Caco-2 (cell line): ENCODE measurements at regions of chr10 and their contacts with region 1.

Region 1: GRCh38 chr10:32958085-32959005 is at the start of gene ITGB1:
- DNase-seq: peak; percentile 98 to 100
- H3K4me3 ChIP-seq: peak within 1 kb of the TSS; percentile 91
- H3K4me3 Mint-ChIP-seq: peak within 1 kb of the TSS; percentile 92
- H3K27ac Mint-ChIP-seq: peak within 1 kb of the TSS; percentile 99
- H3K4me1 ChIP-seq: peaks cover 49% of the 10 kb centered on the region
- H3K4me1 Mint-ChIP-seq: peaks cover 48% of the 10 kb centered on the region
- H3K27me3 ChIP-seq: no peaks in the 10 kb centered on the region
- H3K27me3 Mint-ChIP-seq: no peaks in the 10 kb centered on the region
- CTCF ChIP-seq: no peak
- total RNA-seq, gene ITGB1: 404 and 474 TPM in 2 replicates

Region 2: DNA sequence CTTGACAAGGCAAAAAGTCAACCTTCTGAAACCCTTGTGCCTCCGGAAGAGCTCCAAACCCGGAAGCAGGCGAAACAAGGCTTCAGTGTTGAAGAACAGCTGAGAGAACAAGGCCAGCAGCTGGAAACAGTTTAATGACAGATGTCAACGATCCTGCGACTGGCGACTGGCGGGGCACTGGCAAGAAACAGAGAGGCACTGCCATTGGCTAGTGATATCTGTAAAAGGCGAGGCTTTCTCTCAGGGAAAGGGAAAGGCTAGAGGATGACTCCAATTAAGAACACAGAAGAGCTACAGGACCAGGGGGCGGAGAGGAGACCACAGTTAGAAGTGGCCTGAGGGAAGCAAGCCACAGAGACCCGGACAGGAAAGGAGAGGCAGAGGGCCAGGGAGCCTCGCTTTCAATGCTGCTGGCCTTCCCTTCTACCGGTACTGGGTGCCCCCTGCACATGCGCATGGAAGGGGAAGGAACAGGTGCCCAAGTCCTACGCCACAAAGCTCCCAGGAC is 19.7 kb before region 1 on chr10:
- CTCF ChIA-PET with region 1: no interaction called
- POLR2A ChIA-PET with region 1: interaction called, 6 read pairs
- intact Hi-C with region 1: loop called (anchors 1 kb)
- DNase-seq: peak in 1 of 2 experiments; percentile 59
- H3K4me3 ChIP-seq: no peak overlapping the region
- H3K4me3 Mint-ChIP-seq: peak overlapping the region; percentile 40
- H3K27ac Mint-ChIP-seq: peak overlapping the region; percentile 70
- H3K4me1 ChIP-seq: peaks cover 29% of the 10 kb centered on the region
- H3K4me1 Mint-ChIP-seq: peaks cover 33% of the 10 kb centered on the region
- H3K27me3 ChIP-seq: no peaks in the 10 kb centered on the region
- H3K27me3 Mint-ChIP-seq: no peaks in the 10 kb centered on the region
- CTCF ChIP-seq: no peak

Region 3: GRCh38 chr10:32971536-32972091 is 13.3 kb after region 1 on chr10:
- CTCF ChIA-PET with region 1: no interaction called
- POLR2A ChIA-PET with region 1: interaction called, 4 read pairs
- intact Hi-C with region 1: loop called (anchors 1 kb)
- DNase-seq: peak; percentile 70 to 72
- H3K4me3 ChIP-seq: no peak overlapping the region
- H3K4me3 Mint-ChIP-seq: peak overlapping the region; percentile 51
- H3K27ac Mint-ChIP-seq: peak overlapping the region; percentile 58
- H3K4me1 ChIP-seq: peaks cover 27% of the 10 kb centered on the region
- H3K4me1 Mint-ChIP-seq: peaks cover 23% of the 10 kb centered on the region
- H3K27me3 ChIP-seq: no peaks in the 10 kb centered on the region
- H3K27me3 Mint-ChIP-seq: no peaks in the 10 kb centered on the region
- CTCF ChIP-seq: no peak

Region 4: DNA sequence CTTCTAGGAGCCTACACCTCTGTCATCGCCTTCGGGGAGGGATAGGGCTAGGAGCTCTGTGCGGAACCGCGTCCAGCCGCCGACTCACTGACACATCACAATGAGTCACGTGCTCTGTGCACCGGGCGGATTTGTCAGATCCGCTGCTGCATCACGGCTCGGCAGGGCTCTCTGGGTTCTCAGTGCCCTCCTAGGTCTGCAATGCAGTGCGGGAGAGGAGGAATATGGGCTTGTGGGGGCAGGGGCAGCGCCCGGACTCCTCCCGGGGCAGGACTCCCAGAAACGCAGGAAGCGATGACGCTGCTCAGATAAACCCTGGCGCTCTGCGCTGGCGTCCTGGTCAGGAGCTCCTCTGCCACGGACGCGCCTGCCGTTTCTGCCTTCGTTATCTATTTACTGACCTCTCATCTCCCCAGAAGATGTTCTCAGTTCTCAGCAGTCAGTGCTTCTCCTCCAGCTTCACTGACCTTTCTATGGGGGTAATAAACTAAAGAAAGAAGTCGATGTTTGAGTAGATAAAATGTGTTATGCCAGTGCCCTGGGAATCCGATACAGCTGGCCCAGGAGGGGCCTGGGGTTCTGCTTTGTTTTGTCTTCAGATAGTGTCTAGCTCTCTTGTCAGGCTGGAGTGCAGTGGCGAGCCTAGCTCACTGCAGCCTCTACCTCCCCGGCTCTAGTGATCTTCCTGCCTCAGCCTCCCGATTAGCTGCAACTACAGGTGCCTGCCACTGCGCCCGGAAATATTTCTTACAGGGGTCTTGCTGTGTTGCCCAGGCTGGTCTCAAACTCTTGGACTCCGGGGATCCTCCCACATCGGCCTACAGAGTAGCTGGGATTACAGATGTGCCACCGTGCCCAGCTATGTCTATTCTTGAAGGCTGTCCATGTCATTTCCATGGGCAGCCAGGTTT is 22.5 kb after region 1 on chr10:
- CTCF ChIA-PET with region 1: interaction called, 3 read pairs
- POLR2A ChIA-PET with region 1: interaction called, 12 read pairs
- intact Hi-C with region 1: loop called (anchors 1 kb)
- DNase-seq: peak; percentile 92 to 96
- H3K4me3 ChIP-seq: peak overlapping the region; percentile 41
- H3K4me3 Mint-ChIP-seq: peak overlapping the region; percentile 94
- H3K27ac Mint-ChIP-seq: peak overlapping the region; percentile 97
- H3K4me1 ChIP-seq: peaks cover 42% of the 10 kb centered on the region
- H3K4me1 Mint-ChIP-seq: peaks cover 27% of the 10 kb centered on the region
- H3K27me3 ChIP-seq: no peaks in the 10 kb centered on the region
- H3K27me3 Mint-ChIP-seq: no peaks in the 10 kb centered on the region
- CTCF ChIP-seq: no peak

Region 5: DNA sequence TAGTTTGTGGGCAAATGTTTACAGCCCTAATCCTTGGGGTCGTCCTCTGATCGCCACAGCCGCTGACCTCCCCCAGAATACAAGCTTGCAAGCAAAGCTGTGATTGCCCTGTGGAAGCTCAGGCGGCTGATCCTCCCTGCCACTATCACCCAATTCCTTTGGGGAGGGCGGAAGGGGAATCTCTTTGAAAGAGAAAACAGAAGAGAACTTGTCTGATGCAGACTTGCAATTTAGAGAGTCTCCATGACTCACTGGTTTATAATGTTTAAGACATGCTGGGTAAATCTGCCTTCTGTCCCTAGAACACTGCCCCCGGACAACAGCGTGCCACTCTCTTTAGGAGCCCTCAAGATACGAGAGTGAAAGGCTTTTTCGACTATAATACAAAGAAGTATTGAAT is 300.6 kb after region 1 on chr10:
- CTCF ChIA-PET with region 1: no interaction called
- POLR2A ChIA-PET with region 1: no interaction called
- intact Hi-C with region 1: loop called (anchors 10 kb)
- DNase-seq: no peak
- H3K4me3 ChIP-seq: no peak overlapping the region
- H3K4me3 Mint-ChIP-seq: no peak overlapping the region
- H3K27ac Mint-ChIP-seq: peak overlapping the region; percentile 55
- H3K4me1 ChIP-seq: peaks cover 42% of the 10 kb centered on the region
- H3K4me1 Mint-ChIP-seq: peaks cover 38% of the 10 kb centered on the region
- H3K27me3 ChIP-seq: no peaks in the 10 kb centered on the region
- H3K27me3 Mint-ChIP-seq: no peaks in the 10 kb centered on the region
- CTCF ChIP-seq: no peak

Region 6: DNA sequence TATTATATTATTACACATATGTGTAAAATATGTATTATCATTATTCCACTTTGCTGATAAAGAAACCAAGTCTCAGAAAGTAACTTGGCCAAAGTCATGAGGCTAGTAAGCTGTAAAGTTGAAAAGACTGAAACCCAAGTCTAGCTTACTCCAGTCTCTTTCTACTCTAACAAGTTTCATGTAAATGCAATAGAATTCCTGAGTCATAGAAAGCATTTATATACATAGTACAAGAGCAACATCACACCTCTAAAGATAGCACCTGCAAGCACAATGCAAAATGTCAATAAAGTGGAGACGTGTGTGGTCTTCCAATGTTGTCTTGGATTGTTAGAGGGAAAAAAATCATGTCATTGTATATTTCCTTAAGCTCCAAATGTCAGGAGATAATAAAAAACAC is 806.3 kb after region 1 on chr10:
- CTCF ChIA-PET with region 1: no interaction called
- POLR2A ChIA-PET with region 1: interaction called, 19 read pairs
- intact Hi-C with region 1: no loop called
- DNase-seq: no peak
- H3K4me3 ChIP-seq: no peak overlapping the region
- H3K4me3 Mint-ChIP-seq: no peak overlapping the region
- H3K27ac Mint-ChIP-seq: no peak overlapping the region
- H3K4me1 ChIP-seq: no peaks in the 10 kb centered on the region
- H3K4me1 Mint-ChIP-seq: no peaks in the 10 kb centered on the region
- H3K27me3 ChIP-seq: no peaks in the 10 kb centered on the region
- H3K27me3 Mint-ChIP-seq: no peaks in the 10 kb centered on the region
- CTCF ChIP-seq: no peak